ENCODE measurements at regions of chr11 and their contacts with region 1.

Region 1: DNA sequence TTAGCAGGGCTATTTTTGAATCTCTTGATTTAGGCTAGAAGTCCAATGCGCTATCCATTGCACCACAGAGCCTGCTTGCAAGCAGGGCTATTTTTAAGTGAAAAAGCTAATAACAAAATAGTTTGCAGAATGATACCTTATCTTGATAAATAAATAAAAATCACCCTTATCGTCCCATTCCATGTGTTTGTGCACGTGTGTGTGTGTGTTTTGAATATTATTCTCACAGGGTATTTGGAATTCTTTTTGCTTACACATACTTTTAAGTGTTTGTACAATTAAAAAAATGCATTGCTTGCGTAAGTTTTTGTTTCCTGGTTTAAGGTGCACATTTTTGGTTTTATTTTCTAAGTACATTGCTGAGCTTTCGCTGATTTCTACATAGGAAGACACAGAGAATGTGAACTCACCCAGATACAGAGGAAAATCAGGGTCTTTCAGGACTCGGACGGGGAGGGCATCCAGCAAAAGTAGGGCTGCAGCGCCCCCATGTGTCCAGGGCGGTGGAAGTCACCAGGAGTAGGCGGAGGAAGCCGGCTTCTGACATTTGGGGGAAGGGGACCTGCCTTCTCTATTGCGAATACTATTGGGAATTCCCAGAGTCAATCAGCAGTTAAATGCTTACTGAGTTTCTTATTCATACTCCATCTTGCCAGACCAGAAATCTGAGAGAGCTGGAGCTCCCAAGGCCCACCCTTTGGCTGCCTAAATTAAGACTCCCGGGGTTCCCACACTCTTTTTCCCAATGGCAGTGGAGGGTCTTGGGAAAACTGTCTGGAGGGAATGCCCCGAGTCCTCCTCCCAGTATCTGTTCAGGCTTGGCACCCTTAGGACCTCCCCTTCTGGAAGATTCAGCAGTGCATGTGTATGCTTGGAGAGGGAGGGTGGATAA is 27.2 kb downstream of the SLC1A2 start:
- DNase-seq: peak; percentile 81
- H3K4me3 ChIP-seq: peak overlapping the region in 1 of 4 donors; percentile 24
- H3K27ac ChIP-seq: no peak overlapping the region
- H3K4me1 ChIP-seq: peaks cover 5 to 25% (median 13%) of the 10 kb centered on the region in 4 donors
- H3K27me3 ChIP-seq: no peaks in the 10 kb centered on the region
- CTCF ChIP-seq: peak; percentile 82 to 86 (median 84)
- EP300 ChIP-seq: no peak
- POLR2A ChIP-seq: no peak

Region 2: DNA sequence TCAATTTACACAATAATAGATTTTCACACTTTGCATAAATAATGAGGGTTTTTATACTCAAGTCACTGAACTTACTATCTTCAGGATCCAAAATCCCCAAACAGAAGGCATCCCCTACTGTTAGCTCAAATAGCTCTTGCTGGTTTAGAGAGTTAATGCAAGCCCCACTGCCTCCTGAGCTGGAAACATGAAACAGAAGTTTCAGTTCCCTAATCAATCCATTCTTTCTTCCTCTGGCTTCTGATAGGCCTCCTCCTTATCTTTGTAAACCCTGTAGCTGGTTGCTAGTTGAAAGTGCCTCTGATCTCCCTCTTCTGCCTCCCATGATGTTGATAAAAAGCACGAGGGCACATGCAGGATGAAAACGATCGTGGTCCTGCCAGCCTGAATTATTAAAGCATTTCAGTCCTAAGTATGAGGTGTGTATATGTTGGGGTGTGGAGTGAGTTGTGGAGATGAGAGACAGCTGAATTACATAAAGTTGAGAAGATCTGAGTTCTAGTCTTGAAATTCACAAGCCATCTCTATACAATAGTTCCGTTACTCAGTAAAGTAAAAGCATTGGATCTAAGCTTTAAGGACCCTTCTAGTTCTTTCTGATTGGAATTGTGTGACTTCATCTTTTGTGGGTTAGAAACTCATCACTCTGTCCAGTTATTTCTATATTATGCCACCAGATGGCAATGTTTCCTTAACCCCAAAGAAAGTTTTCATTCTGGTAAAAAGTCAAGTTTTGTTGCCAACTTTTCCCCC is 806.3 kb before region 1 on chr11:
- in situ Hi-C with region 1: loop called in 1 of 4 experiments (anchors 25 kb)
- intact Hi-C with region 1: loop called (anchors 10 kb)
- DNase-seq: no peak
- H3K4me3 ChIP-seq: no peak overlapping the region
- H3K27ac ChIP-seq: peak overlapping the region in 3 of 4 donors; percentile 9 to 48 (median 32)
- H3K4me1 ChIP-seq: peaks cover 3 to 24% (median 6%) of the 10 kb centered on the region in 4 donors
- H3K27me3 ChIP-seq: no peaks in the 10 kb centered on the region
- CTCF ChIP-seq: peak; percentile 64 to 82 (median 68)
- EP300 ChIP-seq: no peak
- POLR2A ChIP-seq: no peak

Region 3: GRCh38 chr11:34926101-34926830 is 465.9 kb before region 1 on chr11:
- in situ Hi-C with region 1: loop called in 2 of 4 experiments (anchors 5 to 10 kb)
- intact Hi-C with region 1: loop called (anchors 5 kb)
- DNase-seq: no peak
- H3K4me3 ChIP-seq: no peak overlapping the region
- H3K27ac ChIP-seq: no peak overlapping the region
- H3K4me1 ChIP-seq: peaks cover 3 to 51% (median 23%) of the 10 kb centered on the region in 4 donors
- H3K27me3 ChIP-seq: no peaks in the 10 kb centered on the region
- CTCF ChIP-seq: peak; percentile 64 to 73 (median 68)
- EP300 ChIP-seq: no peak
- POLR2A ChIP-seq: no peak

Region 4: DNA sequence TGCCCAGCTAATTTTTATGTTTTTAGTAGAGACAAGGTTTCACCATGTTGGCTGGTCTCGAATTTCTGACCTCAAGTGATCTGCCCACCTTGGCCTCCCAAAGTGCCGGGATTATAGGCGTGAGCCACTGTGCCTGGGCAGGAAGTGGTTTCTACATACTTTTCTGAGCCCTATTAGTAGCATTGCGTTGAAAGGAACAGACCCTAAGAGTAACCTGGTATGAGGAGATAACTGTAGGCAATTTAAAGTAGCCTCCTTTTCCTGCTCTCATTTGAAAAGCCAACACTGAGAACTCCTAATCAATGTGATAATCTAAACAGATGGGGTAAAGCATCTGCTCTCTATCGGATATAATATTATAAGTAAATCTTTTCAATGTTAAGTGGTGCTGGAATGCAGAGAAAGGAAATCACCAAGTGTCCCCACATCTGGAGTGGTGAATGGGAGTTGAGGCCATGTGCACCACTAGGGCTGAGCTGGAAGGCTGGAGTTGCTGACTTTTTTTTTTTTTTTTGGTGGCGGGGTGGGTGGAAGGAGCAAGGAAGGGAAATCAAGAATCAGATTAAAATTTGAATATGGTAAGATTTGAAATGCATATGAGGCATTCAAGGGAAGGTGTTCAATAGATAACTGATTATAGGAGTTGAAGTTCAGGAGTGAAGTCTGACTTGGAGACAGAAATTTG is 455.1 kb before region 1 on chr11:
- in situ Hi-C with region 1: loop called in 1 of 4 experiments (anchors 5 kb)
- intact Hi-C with region 1: no loop called
- DNase-seq: no peak
- H3K4me3 ChIP-seq: no peak overlapping the region
- H3K27ac ChIP-seq: no peak overlapping the region
- H3K4me1 ChIP-seq: peaks cover 0 to 9% (median 0%) of the 10 kb centered on the region in 4 donors
- H3K27me3 ChIP-seq: no peaks in the 10 kb centered on the region
- CTCF ChIP-seq: no peak
- EP300 ChIP-seq: no peak
- POLR2A ChIP-seq: no peak

Region 5: GRCh38 chr11:35529971-35530495 is 137.9 kb after region 1 on chr11:
- in situ Hi-C with region 1: no loop called
- intact Hi-C with region 1: no loop called
- DNase-seq: no peak
- H3K4me3 ChIP-seq: no peak overlapping the region
- H3K27ac ChIP-seq: no peak overlapping the region
- H3K4me1 ChIP-seq: peaks cover 0 to 5% (median 0%) of the 10 kb centered on the region in 4 donors
- H3K27me3 ChIP-seq: peaks cover 42% of the 10 kb centered on the region
- CTCF ChIP-seq: no peak
- EP300 ChIP-seq: no peak
- POLR2A ChIP-seq: no peak